ENCODE measurements at regions of chr6 and their contacts with region 1.

Region 1: GRCh38 chr6:152356451-152357061 is 280.6 kb downstream of the SYNE1 start:
- DNase-seq: no peak
- H3K4me3 Mint-ChIP-seq: no peak overlapping the region
- H3K27ac Mint-ChIP-seq: no peak overlapping the region
- H3K4me1 Mint-ChIP-seq: no peaks in the 10 kb centered on the region
- H3K27me3 Mint-ChIP-seq: no peaks in the 10 kb centered on the region
- CTCF ChIP-seq: no peak

Region 2: DNA sequence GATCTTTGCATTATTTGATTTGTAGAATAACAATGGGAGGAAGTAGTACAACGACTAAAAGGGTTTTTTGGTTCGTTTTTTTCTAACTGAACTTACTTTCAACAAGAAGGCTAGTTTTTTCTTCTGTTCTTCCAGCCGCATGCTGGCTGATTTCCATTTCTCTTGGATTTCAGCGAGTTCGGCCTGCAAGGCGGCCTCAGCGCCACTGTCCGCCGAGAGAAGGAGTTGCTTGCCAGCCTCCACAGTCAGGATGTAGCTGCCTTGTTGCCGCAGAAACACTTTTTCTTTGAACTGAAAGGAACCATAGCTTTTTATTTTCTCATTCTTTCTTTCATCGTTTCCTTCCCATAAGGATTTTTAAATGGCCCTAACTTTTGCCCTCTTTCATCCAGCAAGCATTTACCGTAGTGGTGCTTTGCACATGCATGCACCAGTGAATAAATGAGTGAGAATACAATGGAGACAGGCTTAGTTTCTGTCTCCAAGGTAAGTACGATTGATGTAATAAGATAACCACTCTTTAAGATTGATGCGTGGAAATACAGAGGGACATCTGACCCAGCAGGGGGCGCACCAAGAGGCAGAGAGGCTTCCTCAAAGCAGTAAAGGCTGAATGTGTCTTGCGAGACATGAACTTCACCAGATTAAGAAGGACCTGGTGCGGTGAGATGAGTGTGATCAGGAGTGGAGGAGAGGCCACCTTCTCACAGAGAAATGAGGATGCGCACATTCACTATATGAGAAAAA is 150.3 kb before region 1 on chr6:
- CTCF ChIA-PET with region 1: no interaction called
- intact Hi-C with region 1: loop called (anchors 5 kb)
- DNase-seq: peak; percentile 19
- H3K4me3 Mint-ChIP-seq: no peak overlapping the region
- H3K27ac Mint-ChIP-seq: no peak overlapping the region
- H3K4me1 Mint-ChIP-seq: no peaks in the 10 kb centered on the region
- H3K27me3 Mint-ChIP-seq: no peaks in the 10 kb centered on the region
- CTCF ChIP-seq: no peak

Region 3: GRCh38 chr6:152301764-152302568 is 54.6 kb before region 1 on chr6:
- CTCF ChIA-PET with region 1: no interaction called
- intact Hi-C with region 1: loop called (anchors 5 kb)
- DNase-seq: peak; percentile 75
- H3K4me3 Mint-ChIP-seq: peak overlapping the region; percentile 88
- H3K27ac Mint-ChIP-seq: peak overlapping the region; percentile 58
- H3K4me1 Mint-ChIP-seq: peaks cover 6% of the 10 kb centered on the region
- H3K27me3 Mint-ChIP-seq: no peaks in the 10 kb centered on the region
- CTCF ChIP-seq: peak; percentile 42

Region 4: DNA sequence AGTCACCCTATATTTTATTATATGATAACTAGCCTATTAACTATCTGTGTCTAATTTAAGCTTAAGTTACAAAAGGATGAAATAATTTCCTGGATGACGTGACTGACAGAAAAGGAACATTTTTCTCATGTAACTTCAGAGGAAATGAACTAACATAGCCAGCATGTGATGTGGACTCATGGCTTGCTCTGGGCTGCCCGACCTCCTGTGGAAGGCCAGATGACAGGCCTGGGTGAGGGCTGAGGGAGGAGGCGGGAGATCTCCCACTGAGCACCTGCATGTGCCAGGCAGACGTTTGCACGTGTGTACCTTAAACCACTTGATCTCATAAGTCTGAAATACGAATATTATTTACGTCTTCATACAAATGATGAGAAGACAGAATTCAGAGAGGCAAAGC is 40.5 kb before region 1 on chr6:
- CTCF ChIA-PET with region 1: no interaction called
- intact Hi-C with region 1: no loop called
- DNase-seq: no peak
- H3K4me3 Mint-ChIP-seq: no peak overlapping the region
- H3K27ac Mint-ChIP-seq: no peak overlapping the region
- H3K4me1 Mint-ChIP-seq: no peaks in the 10 kb centered on the region
- H3K27me3 Mint-ChIP-seq: no peaks in the 10 kb centered on the region
- CTCF ChIP-seq: no peak

Measured in Calu3 (cell line).